Posterior vena cava (tissue), 2 donors: ENCODE measurements at regions of chr1 and their contacts with region 1.

Region 1: DNA sequence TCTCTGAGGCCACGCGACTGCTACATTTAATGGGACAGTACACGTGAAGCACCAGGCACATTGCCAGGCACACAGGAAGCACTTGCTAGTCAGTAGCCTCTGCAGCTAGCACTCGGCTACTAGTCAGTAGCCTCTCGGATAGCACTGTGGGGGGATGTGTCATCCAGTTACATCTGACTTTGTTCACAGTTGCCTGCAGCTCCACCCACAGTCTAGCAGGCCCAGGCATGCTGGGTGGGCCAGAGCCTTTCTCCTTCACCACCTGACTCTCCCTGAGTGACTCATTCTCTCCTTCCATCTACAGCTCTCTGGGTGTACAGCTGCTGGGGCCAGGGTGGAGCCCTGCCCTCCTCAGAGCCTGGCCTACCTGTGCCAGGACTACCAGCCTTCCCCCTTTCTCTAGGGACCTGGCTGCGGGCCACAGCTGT is 51.5 kb downstream of the PTPRF start:
- DNase-seq: no peak

Region 2: GRCh38 chr1:44674113-44675000 is 1092.2 kb after region 1 on chr1 and contains the starts of genes ARMH1 and TMEM53:
- intact Hi-C with region 1: loop called in 1 of 2 experiments (anchors 5 kb)
- DNase-seq: peak; percentile 100
- total RNA-seq, gene ARMH1: 1.0 to 1.6 TPM
- total RNA-seq, gene TMEM53: 3.8 to 5.3 TPM